ENCODE measurements at regions of chr14 and their contacts with region 1.

Region 1: GRCh38 chr14:34982417-34983147 is at the start of gene SRP54:
- DNase-seq: peak; percentile 99 to 100 (median 100)
- ATAC-seq: peak; percentile 93
- H3K4me3 ChIP-seq: peak within 1 kb of the TSS; percentile 82 to 87
- H3K4me3 Mint-ChIP-seq: no peak within 1 kb of the TSS
- H3K27ac ChIP-seq: peak within 1 kb of the TSS; percentile 92 to 96
- H3K27ac Mint-ChIP-seq: no peak within 1 kb of the TSS
- H3K4me1 ChIP-seq: peaks cover 34% of the 10 kb centered on the region
- H3K4me1 Mint-ChIP-seq: peaks cover 33% of the 10 kb centered on the region
- H3K27me3 ChIP-seq: no peaks in the 10 kb centered on the region
- H3K27me3 Mint-ChIP-seq: no peaks in the 10 kb centered on the region
- CTCF ChIP-seq: no peak
- total RNA-seq, gene SRP54: 40.4 to 42.4 TPM

Region 2: DNA sequence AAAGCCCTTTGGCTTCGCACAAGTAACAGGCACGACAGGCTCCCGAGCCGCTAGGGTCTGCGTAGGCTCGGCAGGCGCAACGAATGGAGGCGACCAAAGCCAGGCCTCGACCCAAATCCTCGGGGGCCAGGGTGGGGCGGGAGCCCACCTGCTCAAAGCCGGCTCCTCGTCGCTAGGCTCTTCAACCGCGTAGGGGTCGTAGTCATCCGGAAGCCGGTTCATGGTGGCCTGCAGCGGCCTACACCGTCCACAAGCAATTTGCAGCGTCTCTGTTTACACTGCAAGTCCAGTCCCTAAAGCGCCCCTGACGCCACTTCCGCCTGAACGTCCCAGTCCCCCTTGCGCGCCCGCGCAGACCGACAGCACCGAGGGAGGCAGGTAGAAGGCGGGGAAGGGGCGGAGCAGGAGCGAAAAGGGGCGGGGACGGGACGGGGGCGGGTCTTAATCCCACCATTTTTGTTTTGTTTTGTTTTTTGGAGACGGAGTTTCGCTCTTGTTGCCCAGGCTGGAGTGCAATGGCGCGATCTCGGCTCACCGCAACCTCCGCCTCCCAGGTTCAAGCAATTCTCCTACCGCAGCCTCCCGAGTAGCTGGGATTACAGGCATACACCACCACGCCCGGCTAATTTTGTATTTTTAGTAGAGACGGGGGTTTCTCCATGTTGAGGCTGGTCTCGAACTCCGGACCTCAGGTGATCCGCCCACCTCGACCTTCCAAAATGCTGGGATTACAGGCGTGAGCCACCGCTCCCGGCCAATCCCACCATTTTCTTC is 443.0 kb before region 1 on chr14 and contains the start of gene EAPP:
- CTCF ChIA-PET with region 1: no interaction called
- POLR2A ChIA-PET with region 1: no interaction called
- intact Hi-C with region 1: loop called in 1 of 2 experiments (anchors 5 kb)
- DNase-seq: peak; percentile 88 to 97 (median 95)
- ATAC-seq: peak; percentile 98
- H3K4me3 ChIP-seq: peak within 1 kb of the TSS; percentile 94 to 95
- H3K4me3 Mint-ChIP-seq: peak within 1 kb of the TSS; percentile 97
- H3K27ac ChIP-seq: peak within 1 kb of the TSS; percentile 96 to 97
- H3K27ac Mint-ChIP-seq: peak within 1 kb of the TSS; percentile 98
- H3K4me1 ChIP-seq: peaks cover 16% of the 10 kb centered on the region
- H3K4me1 Mint-ChIP-seq: peaks cover 34% of the 10 kb centered on the region
- H3K27me3 ChIP-seq: no peaks in the 10 kb centered on the region
- H3K27me3 Mint-ChIP-seq: no peaks in the 10 kb centered on the region
- CTCF ChIP-seq: no peak
- total RNA-seq, gene EAPP: 91.0 to 91.4 TPM

Region 3: DNA sequence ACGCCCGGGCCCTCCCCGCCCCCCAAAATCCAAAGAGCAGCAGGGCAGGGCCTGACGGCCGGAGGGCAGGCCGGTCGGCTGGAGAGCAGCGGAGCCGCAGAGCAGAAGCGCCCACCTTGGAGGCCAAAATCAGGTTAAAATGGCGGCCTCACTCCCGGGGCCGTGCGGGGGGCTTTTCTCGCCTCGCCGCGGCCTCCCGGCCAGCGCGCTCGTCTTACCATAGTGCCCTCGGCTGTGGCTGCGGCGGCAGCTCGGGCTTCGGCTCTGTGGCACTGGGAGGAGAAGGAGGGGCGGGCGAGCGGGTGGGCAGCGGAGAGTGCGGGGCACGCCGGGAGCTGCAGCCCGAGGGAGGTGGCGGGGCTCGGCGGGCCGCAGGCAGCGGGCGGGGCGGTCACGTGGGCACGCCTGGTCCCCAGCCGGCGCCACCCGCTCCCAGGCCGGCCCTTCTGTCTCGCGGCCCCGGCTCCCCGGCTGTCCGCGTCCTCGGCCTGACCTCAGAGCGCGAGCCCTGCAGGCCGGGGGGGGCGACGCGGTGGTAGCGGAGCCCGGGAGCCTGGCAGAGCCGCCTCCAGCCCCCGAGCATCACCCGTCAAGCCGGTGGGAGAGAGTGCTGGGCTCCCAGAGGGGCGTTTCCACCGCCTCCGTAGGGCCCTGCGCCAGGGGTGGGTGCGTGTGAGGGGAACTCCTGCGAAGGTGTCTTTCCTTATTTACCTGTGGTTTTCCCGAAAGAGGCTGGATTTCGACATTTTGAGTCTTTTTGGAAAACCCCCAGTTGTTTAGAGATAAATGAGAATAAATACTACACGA is 268.1 kb before region 1 on chr14 and contains the start of gene CFL2:
- CTCF ChIA-PET with region 1: no interaction called
- POLR2A ChIA-PET with region 1: interaction called, 4 read pairs
- intact Hi-C with region 1: loop called (anchors 5 kb)
- DNase-seq: peak; percentile 35 to 92 (median 72)
- ATAC-seq: peak; percentile 86
- H3K4me3 ChIP-seq: peak within 1 kb of the TSS; percentile 72 to 78
- H3K4me3 Mint-ChIP-seq: peak within 1 kb of the TSS; percentile 92
- H3K27ac ChIP-seq: peak within 1 kb of the TSS; percentile 45 to 51
- H3K27ac Mint-ChIP-seq: peak within 1 kb of the TSS; percentile 90
- H3K4me1 ChIP-seq: peaks cover 13% of the 10 kb centered on the region
- H3K4me1 Mint-ChIP-seq: peaks cover 33% of the 10 kb centered on the region
- H3K27me3 ChIP-seq: no peaks in the 10 kb centered on the region
- H3K27me3 Mint-ChIP-seq: peaks cover 2% of the 10 kb centered on the region
- CTCF ChIP-seq: no peak
- total RNA-seq, gene CFL2: 35.1 to 35.4 TPM

Region 4: DNA sequence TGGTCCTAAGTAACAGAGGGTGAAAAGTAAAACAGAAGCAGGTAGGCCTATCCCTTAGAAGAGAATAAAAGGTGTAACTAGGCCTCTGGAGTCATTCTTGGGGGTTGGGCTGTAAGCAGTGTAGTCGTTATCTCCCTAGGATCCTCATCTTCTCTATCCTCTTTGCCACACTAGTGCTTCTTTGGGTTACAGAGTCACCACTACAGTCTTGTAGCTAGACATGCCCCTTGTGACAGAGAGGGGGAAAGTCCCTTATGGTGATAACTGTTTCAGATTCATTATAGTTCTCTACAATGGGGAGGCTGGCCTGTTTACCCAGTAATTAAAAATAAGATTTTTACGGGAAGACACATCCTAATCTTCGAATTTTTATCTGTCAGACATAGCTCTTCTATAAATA is 16.2 kb before region 1 on chr14:
- CTCF ChIA-PET with region 1: interaction called, 4 read pairs
- POLR2A ChIA-PET with region 1: interaction called, 10 read pairs
- intact Hi-C with region 1: no loop called
- DNase-seq: peak in 1 of 9 experiments; percentile 19
- ATAC-seq: no peak
- H3K4me3 ChIP-seq: no peak overlapping the region
- H3K4me3 Mint-ChIP-seq: no peak overlapping the region
- H3K27ac ChIP-seq: no peak overlapping the region
- H3K27ac Mint-ChIP-seq: peak overlapping the region; percentile 38
- H3K4me1 ChIP-seq: no peaks in the 10 kb centered on the region
- H3K4me1 Mint-ChIP-seq: peaks cover 13% of the 10 kb centered on the region
- H3K27me3 ChIP-seq: no peaks in the 10 kb centered on the region
- H3K27me3 Mint-ChIP-seq: no peaks in the 10 kb centered on the region
- CTCF ChIP-seq: no peak

Region 5: DNA sequence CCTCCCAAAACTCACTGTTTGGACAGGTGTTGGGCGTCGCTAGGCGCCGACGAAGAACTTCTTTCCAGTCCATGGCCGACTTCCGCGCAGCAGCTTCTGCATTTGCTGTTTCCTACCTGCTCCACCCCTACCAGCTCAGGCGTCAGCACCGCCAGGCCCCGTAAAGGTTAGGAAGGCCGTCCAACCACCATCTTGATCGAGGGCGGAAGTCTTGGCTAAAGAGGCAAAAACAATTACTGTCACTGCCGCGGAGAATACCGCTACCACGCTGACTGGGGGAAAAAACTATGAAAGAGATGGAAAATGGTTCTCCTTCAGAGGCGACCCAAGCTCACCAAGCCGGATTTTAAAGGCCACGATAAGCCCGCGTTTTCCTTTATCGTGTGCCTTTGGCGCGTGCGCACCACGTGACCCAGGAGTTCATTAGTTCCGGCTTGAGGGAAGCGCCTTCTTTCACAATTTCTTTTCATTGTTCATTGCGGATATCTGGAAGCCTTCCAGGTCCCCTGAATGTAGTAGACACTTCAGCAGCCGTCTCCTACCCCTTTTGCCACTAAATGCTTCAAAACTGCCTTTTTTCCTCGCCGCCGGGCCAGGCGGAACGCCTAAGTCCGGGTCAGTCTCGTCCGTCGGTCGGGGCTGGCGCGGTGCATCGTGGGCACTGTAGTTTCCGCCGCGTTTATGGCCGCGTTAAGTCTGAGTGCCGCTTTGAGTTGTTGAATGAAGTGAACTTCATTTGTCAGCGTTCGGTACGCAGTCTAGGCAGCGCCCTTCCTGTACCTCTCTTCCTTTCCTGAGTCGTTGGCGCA is 139.5 kb after region 1 on chr14 and contains the starts of genes PPP2R3C and PRORP:
- CTCF ChIA-PET with region 1: no interaction called
- POLR2A ChIA-PET with region 1: interaction called, 34 read pairs
- intact Hi-C with region 1: loop called in 1 of 2 experiments (anchors 1 kb)
- DNase-seq: peak; percentile 78 to 96 (median 88)
- ATAC-seq: peak; percentile 83
- H3K4me3 ChIP-seq: peak within 1 kb of the TSS; percentile 71 to 90
- H3K4me3 Mint-ChIP-seq: peak within 1 kb of the TSS; percentile 99
- H3K27ac ChIP-seq: peak within 1 kb of the TSS; percentile 96 to 97
- H3K27ac Mint-ChIP-seq: peak within 1 kb of the TSS; percentile 100
- H3K4me1 ChIP-seq: peaks cover 33% of the 10 kb centered on the region
- H3K4me1 Mint-ChIP-seq: peaks cover 66% of the 10 kb centered on the region
- H3K27me3 ChIP-seq: no peaks in the 10 kb centered on the region
- H3K27me3 Mint-ChIP-seq: no peaks in the 10 kb centered on the region
- CTCF ChIP-seq: no peak
- total RNA-seq, gene PPP2R3C: 44.2 to 51.4 TPM
- total RNA-seq, gene PRORP: 16.5 to 21.9 TPM

Region 6: GRCh38 chr14:35808076-35808652 is 825.6 kb after region 1 on chr14:
- CTCF ChIA-PET with region 1: no interaction called
- POLR2A ChIA-PET with region 1: no interaction called
- intact Hi-C with region 1: loop called in 1 of 2 experiments (anchors 2 kb)
- DNase-seq: peak in 3 of 9 experiments; percentile 16 to 63 (median 41)
- ATAC-seq: no peak
- H3K4me3 ChIP-seq: peak overlapping the region; percentile 68 to 80
- H3K4me3 Mint-ChIP-seq: peak overlapping the region; percentile 98
- H3K27ac ChIP-seq: peak overlapping the region; percentile 49 to 86
- H3K27ac Mint-ChIP-seq: peak overlapping the region; percentile 92
- H3K4me1 ChIP-seq: peaks cover 15% of the 10 kb centered on the region
- H3K4me1 Mint-ChIP-seq: peaks cover 38% of the 10 kb centered on the region
- H3K27me3 ChIP-seq: no peaks in the 10 kb centered on the region
- H3K27me3 Mint-ChIP-seq: no peaks in the 10 kb centered on the region
- CTCF ChIP-seq: no peak